ENCODE measurements at regions of chr16 and their contacts with region 1.

Region 1: DNA sequence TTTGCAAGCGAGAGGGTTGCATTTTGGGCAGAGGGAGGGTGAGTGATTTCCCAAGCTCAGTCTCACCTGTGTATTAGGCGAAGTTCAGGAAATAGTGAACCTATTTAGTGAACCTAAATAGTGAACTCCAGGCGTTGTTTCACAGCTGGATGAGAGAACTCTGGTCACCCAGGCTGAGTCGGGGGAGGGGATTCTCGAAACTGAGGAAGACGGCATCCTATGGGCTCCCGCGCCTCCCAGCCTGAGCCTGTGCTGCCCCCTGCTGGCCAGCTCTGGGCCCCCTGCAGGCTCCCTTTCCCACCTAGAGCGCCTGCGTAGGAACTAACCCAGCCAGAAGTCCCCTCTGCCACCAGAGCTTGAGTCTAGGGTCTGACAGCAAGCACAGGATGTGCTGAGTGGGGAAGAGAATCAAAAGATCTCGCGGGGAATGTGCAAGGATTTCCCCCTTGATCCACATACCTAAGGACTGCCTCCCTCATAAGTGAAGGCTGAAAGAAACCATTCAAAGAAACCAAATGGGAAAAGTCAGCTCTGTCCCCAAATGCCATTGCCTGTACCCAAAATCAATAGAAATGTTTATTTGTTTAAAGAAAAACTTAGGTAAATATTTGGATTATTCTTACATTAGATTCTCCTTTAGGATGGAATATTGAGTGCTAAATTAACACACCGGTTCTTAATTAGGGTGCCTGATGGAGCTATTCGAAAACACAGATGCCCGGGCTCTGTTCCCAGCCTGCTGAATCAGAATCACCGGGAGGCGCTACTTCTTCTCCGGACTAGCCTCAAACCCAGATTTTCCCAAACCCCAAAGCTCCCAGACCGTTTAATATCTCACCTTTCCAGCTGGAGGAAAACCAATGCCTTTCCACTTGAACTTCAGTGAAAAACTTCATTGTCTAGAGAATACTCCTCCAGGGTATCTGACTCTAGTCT is 14.8 kb upstream of the MARVELD3 start:
- DNase-seq: peak; percentile 87
- ATAC-seq: peak; percentile 86
- H3K4me3 Mint-ChIP-seq: no peak overlapping the region
- H3K27ac Mint-ChIP-seq: no peak overlapping the region
- H3K4me1 Mint-ChIP-seq: peaks cover 9% of the 10 kb centered on the region
- H3K27me3 Mint-ChIP-seq: peaks cover 19% of the 10 kb centered on the region
- CTCF ChIP-seq: peak; percentile 93

Region 2: GRCh38 chr16:71412270-71413160 is 198.7 kb before region 1 on chr16:
- CTCF ChIA-PET with region 1: interaction called, 34 read pairs
- POLR2A ChIA-PET with region 1: no interaction called
- intact Hi-C with region 1: loop called (anchors 10 kb)
- DNase-seq: peak; percentile 77
- ATAC-seq: peak; percentile 88
- H3K4me3 Mint-ChIP-seq: no peak overlapping the region
- H3K27ac Mint-ChIP-seq: no peak overlapping the region
- H3K4me1 Mint-ChIP-seq: peaks cover 9% of the 10 kb centered on the region
- H3K27me3 Mint-ChIP-seq: peaks cover 12% of the 10 kb centered on the region
- CTCF ChIP-seq: peak; percentile 85

Region 3: GRCh38 chr16:71537643-71538042 is 73.6 kb before region 1 on chr16:
- CTCF ChIA-PET with region 1: interaction called, 27 read pairs
- POLR2A ChIA-PET with region 1: no interaction called
- intact Hi-C with region 1: no loop called
- DNase-seq: peak; percentile 69
- ATAC-seq: peak; percentile 76
- H3K4me3 Mint-ChIP-seq: no peak overlapping the region
- H3K27ac Mint-ChIP-seq: no peak overlapping the region
- H3K4me1 Mint-ChIP-seq: no peaks in the 10 kb centered on the region
- H3K27me3 Mint-ChIP-seq: peaks cover 4% of the 10 kb centered on the region
- CTCF ChIP-seq: peak; percentile 49

Region 4: GRCh38 chr16:71564155-71564967 is 46.8 kb before region 1 on chr16:
- CTCF ChIA-PET with region 1: interaction called, 87 read pairs
- POLR2A ChIA-PET with region 1: interaction called, 7 read pairs
- intact Hi-C with region 1: loop called (anchors 5 kb)
- DNase-seq: no peak
- ATAC-seq: no peak
- H3K4me3 Mint-ChIP-seq: peak overlapping the region; percentile 86
- H3K27ac Mint-ChIP-seq: peak overlapping the region; percentile 96
- H3K4me1 Mint-ChIP-seq: peaks cover 15% of the 10 kb centered on the region
- H3K27me3 Mint-ChIP-seq: no peaks in the 10 kb centered on the region
- CTCF ChIP-seq: no peak

Region 5: GRCh38 chr16:71585318-71585703 is 25.9 kb before region 1 on chr16:
- CTCF ChIA-PET with region 1: interaction called, 10 read pairs
- POLR2A ChIA-PET with region 1: no interaction called
- intact Hi-C with region 1: no loop called
- DNase-seq: no peak
- ATAC-seq: no peak
- H3K4me3 Mint-ChIP-seq: no peak overlapping the region
- H3K27ac Mint-ChIP-seq: no peak overlapping the region
- H3K4me1 Mint-ChIP-seq: no peaks in the 10 kb centered on the region
- H3K27me3 Mint-ChIP-seq: peaks cover 21% of the 10 kb centered on the region
- CTCF ChIP-seq: no peak

Region 6: DNA sequence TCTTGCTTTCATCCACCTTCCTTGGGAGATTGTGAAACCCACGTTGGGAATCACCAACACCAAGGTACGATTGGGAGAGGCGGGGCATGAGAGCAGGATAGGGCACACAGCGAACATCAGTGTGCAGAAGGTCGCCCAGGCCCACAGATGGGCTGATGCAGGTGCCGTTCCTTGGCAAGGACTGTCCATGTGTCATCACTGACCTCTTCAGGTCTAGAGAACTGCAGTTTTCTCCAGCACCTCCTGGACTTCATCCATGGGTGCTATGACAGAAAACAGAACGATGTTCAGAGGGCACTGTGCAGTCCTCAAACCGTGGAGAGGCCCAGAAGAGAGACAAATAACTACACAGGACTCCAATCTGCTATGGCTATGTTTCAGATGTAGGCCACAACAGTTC is 10.4 kb before region 1 on chr16:
- CTCF ChIA-PET with region 1: interaction called, 14 read pairs
- POLR2A ChIA-PET with region 1: no interaction called
- intact Hi-C with region 1: no loop called
- DNase-seq: no peak
- ATAC-seq: no peak
- H3K4me3 Mint-ChIP-seq: no peak overlapping the region
- H3K27ac Mint-ChIP-seq: no peak overlapping the region
- H3K4me1 Mint-ChIP-seq: no peaks in the 10 kb centered on the region
- H3K27me3 Mint-ChIP-seq: peaks cover 14% of the 10 kb centered on the region
- CTCF ChIP-seq: no peak

Region 7: DNA sequence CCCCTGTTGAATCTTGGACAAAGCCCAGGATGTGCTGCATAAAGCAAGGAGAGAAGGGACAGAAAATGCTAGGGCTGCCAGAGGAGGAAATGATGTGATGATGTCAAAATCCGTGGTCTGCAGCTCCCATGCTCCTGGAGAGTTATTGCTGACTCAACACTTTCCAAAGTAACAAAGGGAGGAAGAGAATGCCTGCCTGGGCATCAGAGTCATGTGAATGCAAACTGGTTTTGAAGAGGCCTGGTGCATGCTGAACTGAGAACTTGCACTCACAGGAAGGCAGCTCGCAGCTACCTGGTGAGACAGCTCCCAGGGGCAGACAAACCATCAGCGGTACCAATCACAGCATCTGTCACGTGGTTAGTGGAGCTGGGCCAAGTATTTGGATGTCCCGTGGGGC is 17.6 kb after region 1 on chr16:
- CTCF ChIA-PET with region 1: interaction called, 33 read pairs
- POLR2A ChIA-PET with region 1: no interaction called
- intact Hi-C with region 1: no loop called
- DNase-seq: no peak
- ATAC-seq: no peak
- H3K4me3 Mint-ChIP-seq: no peak overlapping the region
- H3K27ac Mint-ChIP-seq: no peak overlapping the region
- H3K4me1 Mint-ChIP-seq: peaks cover 2% of the 10 kb centered on the region
- H3K27me3 Mint-ChIP-seq: peaks cover 10% of the 10 kb centered on the region
- CTCF ChIP-seq: no peak

Region 8: GRCh38 chr16:71658771-71659170 is 47.6 kb after region 1 on chr16:
- CTCF ChIA-PET with region 1: no interaction called
- POLR2A ChIA-PET with region 1: no interaction called
- intact Hi-C with region 1: no loop called
- DNase-seq: no peak
- ATAC-seq: no peak
- H3K4me3 Mint-ChIP-seq: no peak overlapping the region
- H3K27ac Mint-ChIP-seq: no peak overlapping the region
- H3K4me1 Mint-ChIP-seq: no peaks in the 10 kb centered on the region
- H3K27me3 Mint-ChIP-seq: no peaks in the 10 kb centered on the region
- CTCF ChIP-seq: no peak